ENCODE measurements at regions of chr11 and their contacts with region 1.

Region 1: DNA sequence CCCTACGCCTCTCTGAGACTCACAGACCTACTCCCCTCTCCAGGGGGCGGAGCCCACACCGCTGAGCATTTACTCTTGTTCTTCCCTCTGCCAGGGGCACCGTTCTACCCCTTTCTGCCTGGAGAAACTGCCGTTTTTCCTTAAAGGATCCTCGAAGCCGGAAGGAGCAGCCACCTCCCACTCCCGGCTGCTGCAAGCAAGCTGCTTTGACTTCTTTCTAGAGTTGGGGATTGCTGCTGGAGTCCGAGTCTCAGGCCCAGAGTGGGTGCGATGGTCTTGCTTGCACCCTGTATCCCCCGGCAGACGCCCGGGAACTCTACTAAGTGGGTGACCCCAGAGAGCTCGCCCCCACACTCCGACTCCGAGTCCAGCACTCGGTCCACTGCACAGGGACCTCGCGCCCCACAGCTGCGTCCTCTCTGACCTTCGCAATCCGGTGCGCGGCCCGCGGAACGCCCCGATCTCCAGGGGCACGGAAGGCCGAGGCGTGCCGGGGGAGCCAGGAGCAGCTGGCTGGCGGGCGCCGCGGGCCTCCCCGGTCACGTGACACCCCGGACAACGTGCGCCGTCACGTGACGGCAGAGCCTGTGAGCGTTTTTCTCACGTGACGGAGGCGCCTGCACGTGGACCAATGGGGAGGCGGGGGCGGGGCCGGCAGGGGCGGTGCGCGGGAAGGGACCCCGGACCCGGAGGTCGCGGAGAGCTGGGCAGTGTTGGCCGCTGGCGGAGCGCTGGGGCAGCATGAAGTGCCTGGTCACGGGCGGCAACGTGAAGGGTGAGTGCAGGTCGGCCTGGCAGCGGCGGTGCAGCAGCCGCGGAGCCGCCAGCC is at the start of gene RAD9A:
- DNase-seq: peak; percentile 92 to 98 (median 96)
- ATAC-seq: peak; percentile 91
- H3K4me3 ChIP-seq: peak within 1 kb of the TSS; percentile 81 to 89
- H3K27ac ChIP-seq: peak within 1 kb of the TSS; percentile 49 to 85
- H3K4me1 ChIP-seq: peaks cover 5 to 26% of the 10 kb centered on the region in 2 donors
- H3K27me3 ChIP-seq: no peaks in the 10 kb centered on the region
- CTCF ChIP-seq: no peak
- polyA plus RNA-seq, gene RAD9A: 22.9 to 31.3 (median 24.5) TPM

Region 2: GRCh38 chr11:67039989-67040546 is 351.4 kb before region 1 on chr11:
- intact Hi-C with region 1: no loop called
- DNase-seq: no peak
- ATAC-seq: no peak
- H3K4me3 ChIP-seq: no peak overlapping the region
- H3K27ac ChIP-seq: no peak overlapping the region
- H3K4me1 ChIP-seq: no peaks in the 10 kb centered on the region
- H3K27me3 ChIP-seq: peaks cover 0 to 15% of the 10 kb centered on the region in 2 donors
- CTCF ChIP-seq: no peak

Region 3: DNA sequence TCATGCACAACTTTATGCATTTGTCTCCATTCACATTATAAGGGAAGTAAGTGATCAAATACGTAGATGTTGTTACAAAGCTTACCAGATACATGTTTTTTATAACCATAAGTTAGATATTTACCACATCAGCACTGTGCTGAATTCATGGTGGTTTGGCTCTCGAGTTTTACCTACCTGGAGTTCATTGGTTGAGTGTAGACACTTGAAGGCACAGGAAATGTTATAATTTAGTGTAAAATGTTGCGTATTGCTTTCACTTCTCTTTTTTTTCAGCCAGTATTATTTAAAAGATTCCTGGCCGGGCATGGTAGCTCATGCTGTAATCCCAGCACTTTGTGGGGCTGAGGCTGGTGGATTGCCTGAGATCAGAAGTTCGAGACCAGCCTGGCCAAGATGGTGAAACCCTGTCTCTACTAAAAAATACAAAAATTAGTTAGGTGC is 178.3 kb before region 1 on chr11:
- intact Hi-C with region 1: no loop called
- DNase-seq: no peak
- ATAC-seq: peak; percentile 37
- H3K4me3 ChIP-seq: no peak overlapping the region
- H3K27ac ChIP-seq: peak overlapping the region in 1 of 2 donors; percentile 75
- H3K4me1 ChIP-seq: peaks cover 0 to 28% of the 10 kb centered on the region in 2 donors
- H3K27me3 ChIP-seq: no peaks in the 10 kb centered on the region
- CTCF ChIP-seq: no peak

Region 4: DNA sequence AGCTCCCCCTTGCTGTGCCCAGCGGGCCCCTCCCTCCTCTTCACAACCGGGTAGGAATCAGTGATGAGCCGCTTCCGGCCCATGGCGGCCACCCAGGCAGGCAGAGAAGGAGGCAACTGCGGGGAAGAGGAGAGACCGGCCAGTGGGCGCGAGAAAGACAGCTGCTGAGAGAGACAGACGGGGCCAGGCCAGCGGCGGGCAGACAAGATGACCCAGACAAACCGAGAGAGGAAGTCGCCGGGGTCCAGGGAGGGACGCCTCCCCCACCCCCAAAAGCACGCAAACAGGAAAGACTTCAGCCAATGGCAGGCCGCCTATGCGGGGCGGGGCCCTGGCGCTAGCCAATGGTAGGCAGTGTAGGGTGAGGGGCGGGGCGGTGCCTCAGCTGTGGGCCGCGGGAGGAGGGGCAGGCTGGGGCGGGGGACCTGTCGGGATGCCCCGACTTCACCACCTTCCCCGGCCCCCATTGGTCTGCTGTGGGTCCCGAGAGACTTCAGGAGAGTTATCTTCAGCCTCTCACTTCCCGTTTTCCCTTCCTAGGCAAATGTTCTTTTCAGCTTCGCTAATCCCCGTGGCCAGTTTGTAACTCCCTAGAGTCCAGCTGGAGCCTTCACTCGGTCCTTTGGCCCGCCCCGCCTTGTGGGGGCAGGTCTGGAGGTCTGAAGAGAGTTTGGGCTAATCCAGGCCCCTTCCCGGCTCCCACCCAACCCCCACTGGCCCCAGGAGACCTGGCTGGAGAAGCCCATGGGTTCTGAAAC is 38.0 kb before region 1 on chr11 and contains the start of gene POLD4:
- intact Hi-C with region 1: loop called in 1 of 2 experiments (anchors 5 kb)
- DNase-seq: peak; percentile 92 to 99 (median 96)
- ATAC-seq: peak; percentile 89
- H3K4me3 ChIP-seq: peak within 1 kb of the TSS; percentile 56 to 77
- H3K27ac ChIP-seq: peak within 1 kb of the TSS; percentile 98 to 100
- H3K4me1 ChIP-seq: peaks cover 31 to 67% of the 10 kb centered on the region in 2 donors
- H3K27me3 ChIP-seq: no peaks in the 10 kb centered on the region
- CTCF ChIP-seq: no peak
- polyA plus RNA-seq, gene POLD4: 26.7 to 35.1 (median 32.5) TPM

Region 5: DNA sequence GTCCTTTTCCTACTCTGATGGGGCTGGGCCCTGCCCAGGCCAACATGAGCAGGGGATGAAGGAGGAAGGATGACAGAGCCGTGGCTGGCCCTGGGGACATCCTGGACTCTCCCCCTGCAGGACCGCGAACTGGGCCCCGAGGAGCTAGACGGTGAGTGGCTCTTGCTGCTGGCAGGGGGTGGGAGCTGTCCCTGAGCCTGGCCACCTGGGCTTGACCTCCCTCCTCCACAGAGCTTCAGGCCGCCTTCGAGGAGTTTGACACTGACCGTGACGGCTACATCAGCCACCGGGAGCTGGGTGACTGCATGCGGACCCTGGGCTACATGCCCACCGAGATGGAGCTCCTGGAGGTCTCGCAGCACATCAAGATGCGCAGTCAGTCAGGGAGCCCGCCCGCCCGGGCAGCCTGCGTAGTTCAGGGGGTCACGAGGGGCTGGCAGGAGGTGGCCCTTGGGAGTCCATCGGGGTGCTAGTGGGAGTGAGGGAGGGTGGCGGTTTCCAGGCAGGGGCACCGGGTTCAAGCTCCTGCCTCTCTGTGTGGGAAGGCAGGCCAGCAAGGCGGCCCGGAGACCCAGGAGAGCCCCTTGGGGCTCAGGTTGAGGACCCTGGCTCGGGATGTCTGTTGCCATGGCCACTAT is 64.7 kb after region 1 on chr11:
- intact Hi-C with region 1: no loop called
- DNase-seq: no peak
- ATAC-seq: no peak
- H3K4me3 ChIP-seq: no peak overlapping the region
- H3K27ac ChIP-seq: no peak overlapping the region
- H3K4me1 ChIP-seq: no peaks in the 10 kb centered on the region
- H3K27me3 ChIP-seq: no peaks in the 10 kb centered on the region
- CTCF ChIP-seq: no peak

Region 6: DNA sequence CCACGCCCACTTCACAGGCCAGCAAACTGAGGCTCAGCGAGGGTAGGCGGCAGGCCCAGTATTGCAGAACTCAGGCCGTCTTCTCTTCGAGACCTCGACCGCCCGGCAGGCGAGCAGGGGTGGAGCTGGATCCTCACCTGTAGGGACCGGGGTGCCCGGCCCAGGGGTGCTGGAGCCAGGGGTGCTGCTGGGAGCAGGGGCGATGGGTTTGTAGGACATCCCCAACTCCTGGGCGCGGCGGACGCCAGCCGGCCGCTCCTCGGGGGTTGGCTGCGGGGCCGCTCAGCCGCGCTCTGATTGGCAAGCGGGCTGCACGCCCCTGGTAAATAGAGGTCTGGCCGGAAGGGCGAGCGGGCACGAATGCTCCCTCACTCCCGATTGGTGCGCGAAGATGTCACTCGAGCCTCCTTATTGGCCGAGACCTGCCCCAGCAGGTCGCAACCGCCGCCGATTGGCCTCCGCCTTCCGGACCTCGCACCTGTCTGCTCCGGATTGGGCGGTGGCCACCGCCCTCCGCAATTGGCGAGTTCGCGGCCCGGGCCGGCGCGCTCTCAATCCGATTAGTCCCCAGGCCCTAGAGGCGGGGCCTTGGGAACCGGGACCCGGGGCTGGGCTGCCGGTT is 116.5 kb after region 1 on chr11 and contains the start of gene CDK2AP2:
- intact Hi-C with region 1: loop called in 1 of 2 experiments (anchors 5 kb)
- DNase-seq: peak; percentile 90 to 100 (median 98)
- ATAC-seq: peak; percentile 82
- H3K4me3 ChIP-seq: peak within 1 kb of the TSS; percentile 83 to 94
- H3K27ac ChIP-seq: peak within 1 kb of the TSS; percentile 97 to 99
- H3K4me1 ChIP-seq: peaks cover 24 to 52% of the 10 kb centered on the region in 2 donors
- H3K27me3 ChIP-seq: peaks cover 0 to 46% of the 10 kb centered on the region in 2 donors
- CTCF ChIP-seq: no peak
- polyA plus RNA-seq, gene CDK2AP2: 25.8 to 40.0 (median 29.2) TPM